Activated naive CD4-positive, alpha-beta T cell treated with anti-CD3 and anti-CD28 coated beads for 36 hours (primary cell): ENCODE measurements at regions of chr12 and their contacts with region 1.

Region 1: GRCh38 chr12:62799126-62799736 is 135.7 kb downstream of the PPM1H start:
- DNase-seq: peak; percentile 71
- H3K4me3 Mint-ChIP-seq: no peak overlapping the region
- H3K27ac Mint-ChIP-seq: no peak overlapping the region
- H3K4me1 Mint-ChIP-seq: no peaks in the 10 kb centered on the region
- H3K27me3 Mint-ChIP-seq: no peaks in the 10 kb centered on the region

Region 2: GRCh38 chr12:62581288-62582064 is 217.8 kb before region 1 on chr12:
- CTCF ChIA-PET with region 1: interaction called, 96 read pairs
- intact Hi-C with region 1: loop called (anchors 1 kb)
- DNase-seq: no peak
- H3K4me3 Mint-ChIP-seq: no peak overlapping the region
- H3K27ac Mint-ChIP-seq: no peak overlapping the region
- H3K4me1 Mint-ChIP-seq: no peaks in the 10 kb centered on the region
- H3K27me3 Mint-ChIP-seq: no peaks in the 10 kb centered on the region

Region 3: DNA sequence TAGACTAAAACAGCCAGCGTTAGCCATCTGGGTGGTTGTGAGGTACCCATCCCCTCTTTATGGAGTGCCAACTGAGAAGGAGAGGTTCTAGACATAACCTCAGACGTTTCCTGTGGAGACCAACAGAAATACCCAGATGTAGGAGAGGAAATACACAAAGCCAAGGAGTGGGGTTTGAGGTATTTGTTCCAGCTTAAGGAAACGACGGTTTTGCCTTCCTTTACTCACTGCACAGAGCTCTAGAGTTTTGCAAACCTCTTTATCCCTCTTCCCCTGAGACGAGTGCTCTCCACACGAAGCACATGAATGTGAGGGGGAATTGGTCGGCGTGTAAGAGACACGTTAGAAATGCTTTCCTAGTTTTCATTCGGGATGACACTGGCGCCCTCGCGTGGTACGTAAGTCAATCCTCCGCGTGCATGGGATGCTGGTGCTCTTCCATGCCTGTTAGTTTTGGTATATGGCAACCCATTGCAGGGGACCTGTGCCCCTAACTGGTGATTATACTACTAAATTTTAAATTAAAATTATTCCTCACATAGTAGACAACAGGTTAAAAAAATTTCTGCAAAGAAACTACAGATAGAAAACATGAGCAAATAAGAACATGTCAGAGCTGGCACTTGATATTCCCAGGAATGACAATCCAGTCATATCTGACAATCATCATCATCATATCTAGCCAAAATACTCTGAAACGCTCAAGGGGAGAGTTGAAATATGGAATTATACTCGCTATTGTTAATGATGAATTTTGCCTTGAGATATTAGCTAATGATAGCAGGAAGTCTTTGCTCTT is 14.0 kb after region 1 on chr12:
- CTCF ChIA-PET with region 1: interaction called, 23 read pairs
- intact Hi-C with region 1: no loop called
- DNase-seq: peak; percentile 60
- H3K4me3 Mint-ChIP-seq: peak overlapping the region; percentile 52
- H3K27ac Mint-ChIP-seq: no peak overlapping the region
- H3K4me1 Mint-ChIP-seq: peaks cover 8% of the 10 kb centered on the region
- H3K27me3 Mint-ChIP-seq: peaks cover 16% of the 10 kb centered on the region